Body of pancreas (tissue), 4 donors: ENCODE measurements at regions of chr14 and their contacts with region 1.

Region 1: GRCh38 chr14:104361101-104361591 is 218.4 kb upstream of the C14orf180 start:
- DNase-seq: peak in 1 of 4 donors; percentile 6
- ATAC-seq: no peak
- H3K4me3 ChIP-seq: no peak overlapping the region
- H3K27ac ChIP-seq: no peak overlapping the region
- H3K4me1 ChIP-seq: peaks cover 10% of the 10 kb centered on the region
- H3K27me3 ChIP-seq: no peaks in the 10 kb centered on the region
- CTCF ChIP-seq: no peak
- POLR2A ChIP-seq: no peak

Region 2: DNA sequence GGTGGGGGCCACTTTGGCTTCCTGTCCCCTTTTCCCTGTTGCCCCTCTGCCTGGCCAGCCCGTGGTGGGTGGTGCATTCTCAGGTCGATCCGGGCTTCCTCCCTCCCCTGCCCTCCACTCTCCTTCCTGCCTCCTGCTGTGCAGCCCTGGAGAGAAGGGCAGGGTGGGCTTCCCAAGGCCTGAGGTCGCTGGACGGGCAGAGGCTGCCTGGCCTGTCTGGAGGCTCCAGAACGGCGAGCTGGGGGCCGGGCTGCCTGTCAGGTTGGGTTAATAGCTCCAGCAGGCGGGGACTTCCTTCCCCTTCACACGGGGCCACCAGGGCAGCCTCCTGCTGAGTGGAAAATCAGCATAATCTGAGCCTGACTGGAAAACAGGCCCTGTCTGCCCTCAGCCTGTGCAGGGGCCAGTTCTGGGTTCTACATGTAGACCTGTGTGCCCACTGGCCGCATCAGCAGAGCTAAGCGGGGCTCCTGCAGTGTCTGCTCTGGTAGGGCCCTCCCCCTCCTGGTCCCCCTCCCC is 211.5 kb before region 1 on chr14:
- intact Hi-C with region 1: loop called (anchors 10 kb)
- DNase-seq: peak in 1 of 4 donors; percentile 50
- ATAC-seq: no peak
- H3K4me3 ChIP-seq: no peak overlapping the region
- H3K27ac ChIP-seq: peak overlapping the region in 1 of 4 donors; percentile 5
- H3K4me1 ChIP-seq: peaks cover 47% of the 10 kb centered on the region
- H3K27me3 ChIP-seq: no peaks in the 10 kb centered on the region
- CTCF ChIP-seq: no peak
- POLR2A ChIP-seq: no peak